Right ventricle myocardium inferior (tissue), 1 donor: ENCODE measurements at regions of chr10 and their contacts with region 1.

Region 1: DNA sequence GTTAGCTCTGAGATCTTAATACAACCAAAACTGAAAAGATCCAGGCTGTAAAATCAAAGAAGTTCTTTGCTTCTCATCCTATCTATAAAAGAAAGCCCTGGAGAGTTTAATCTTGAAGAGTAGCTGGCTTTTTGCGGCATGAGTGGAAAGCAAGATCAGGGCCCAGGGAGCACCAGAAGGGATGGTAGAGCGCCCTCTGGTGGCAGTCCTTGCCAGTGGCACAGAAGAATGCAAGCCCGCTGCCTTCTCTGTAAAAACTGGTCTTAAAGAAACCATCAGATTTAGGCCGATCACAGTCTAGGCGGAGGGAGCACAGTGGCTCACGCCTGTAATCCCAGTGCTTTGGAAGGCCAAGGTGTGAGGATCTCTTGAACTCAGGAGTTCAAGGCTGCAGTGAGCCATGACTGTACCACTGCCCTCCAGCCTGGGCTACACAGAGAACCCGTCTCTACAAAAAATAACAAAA is 35.6 kb downstream of the CPN1 start:
- DNase-seq: peak; percentile 92
- ATAC-seq: peak; percentile 64

Region 2: DNA sequence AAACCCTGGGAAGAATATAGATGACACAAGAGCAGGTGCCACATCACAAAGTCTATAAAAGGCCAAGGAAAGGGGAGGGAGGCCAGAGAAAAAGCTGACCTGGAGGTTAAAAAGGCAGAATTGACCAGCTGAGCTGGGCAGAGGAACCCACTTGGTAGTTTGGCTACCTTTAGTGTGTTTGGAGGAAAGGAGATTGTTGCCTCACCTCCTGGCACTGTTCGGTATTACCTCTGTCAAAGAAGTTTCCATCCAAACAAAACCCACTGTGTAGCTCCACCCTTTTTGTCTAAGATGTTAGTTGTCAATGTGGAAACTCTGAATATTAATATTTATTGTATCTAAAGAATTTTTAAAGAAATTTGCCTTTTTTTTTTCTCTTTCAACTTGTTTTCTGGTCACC is 363.3 kb before region 1 on chr10:
- intact Hi-C with region 1: no loop called
- DNase-seq: no peak
- ATAC-seq: no peak

Region 3: GRCh38 chr10:99845837-99846382 is 200.1 kb before region 1 on chr10:
- intact Hi-C with region 1: loop called (anchors 1 kb)
- DNase-seq: no peak
- ATAC-seq: peak; percentile 92

Region 4: DNA sequence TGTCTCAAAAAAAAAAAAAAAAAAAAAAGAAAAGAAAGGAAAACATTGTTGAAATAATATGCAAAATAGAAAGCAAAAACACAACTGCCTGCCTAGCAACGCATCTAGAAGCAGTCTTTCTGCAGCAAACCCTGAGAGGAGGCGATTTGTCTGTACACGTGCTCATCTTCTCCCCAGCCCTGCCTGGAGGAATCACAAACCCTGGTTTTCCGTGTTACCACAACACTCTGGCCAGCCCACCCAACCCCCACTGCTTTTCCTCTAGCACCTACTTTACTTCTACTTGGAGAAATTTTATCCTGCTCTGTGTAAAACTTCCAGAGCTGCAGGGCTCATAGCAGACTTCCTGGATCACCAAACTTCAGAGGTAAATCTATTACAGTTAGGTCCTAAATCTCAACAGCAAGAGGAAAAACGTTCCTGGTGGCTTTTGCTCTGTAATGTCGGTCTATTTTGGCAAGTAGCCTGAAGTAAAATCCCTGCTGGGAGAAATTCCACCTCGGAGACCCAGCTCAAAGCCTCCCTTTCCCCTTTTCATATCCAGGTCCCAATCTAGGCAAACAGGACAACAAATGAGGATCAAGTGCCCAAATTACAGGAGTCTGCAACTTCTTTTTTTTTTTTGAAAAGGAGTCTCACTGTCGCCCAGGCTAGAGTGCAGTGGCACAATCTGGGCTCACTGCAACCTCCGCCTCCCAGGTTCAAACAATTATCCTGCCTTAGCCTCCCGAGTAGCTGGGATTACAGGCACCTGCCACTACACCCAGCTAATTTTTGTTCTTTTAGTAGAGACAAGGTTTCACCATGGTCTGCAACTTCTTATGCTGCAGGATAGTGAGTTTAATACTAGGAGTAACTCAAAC is 127.9 kb before region 1 on chr10:
- intact Hi-C with region 1: loop called (anchors 10 kb)
- DNase-seq: no peak
- ATAC-seq: peak; percentile 37

Region 5: GRCh38 chr10:100130831-100131230 is 84.8 kb after region 1 on chr10:
- intact Hi-C with region 1: no loop called
- DNase-seq: no peak
- ATAC-seq: no peak